ENCODE measurements at regions of chr1 and their contacts with region 1.

Region 1: DNA sequence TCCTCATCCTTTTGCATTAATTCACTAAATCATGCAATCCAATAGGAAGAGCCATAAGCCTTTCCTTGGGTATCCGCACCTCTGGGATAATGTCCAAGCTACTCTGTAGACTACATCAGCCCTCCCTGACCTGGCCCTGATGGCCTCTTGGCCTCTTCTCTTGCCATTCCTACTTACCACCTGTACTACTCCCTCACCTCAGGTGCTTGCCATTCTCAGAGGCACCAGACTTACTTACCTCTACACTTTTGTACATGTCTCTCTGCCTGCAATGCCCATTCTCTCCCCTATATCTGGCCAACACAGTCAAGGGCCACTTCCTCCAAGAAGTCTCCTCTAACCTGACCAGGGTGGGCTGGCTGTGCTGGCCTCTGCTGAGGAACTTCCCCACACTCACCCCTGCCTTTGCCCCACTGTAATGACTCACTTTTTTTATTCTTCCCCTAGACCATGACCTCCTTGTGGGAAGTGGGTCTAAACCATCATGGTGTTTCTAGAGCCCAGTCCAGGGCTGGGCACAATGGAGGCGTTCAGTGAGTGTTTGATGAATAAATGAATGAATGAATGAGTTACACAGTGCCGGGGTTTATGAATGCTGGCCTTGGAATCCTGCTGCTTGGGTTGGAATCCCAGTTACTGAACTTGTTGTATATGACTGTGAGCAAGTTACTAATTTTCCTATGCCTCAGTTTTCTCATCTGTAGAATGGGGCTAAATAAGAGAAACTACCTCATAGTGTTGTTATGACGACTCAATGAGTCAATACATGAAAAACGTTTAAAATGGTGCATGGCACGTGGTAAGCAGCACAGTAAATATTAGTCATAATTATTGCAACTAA is 179.8 kb downstream of the FOXD2 start:
- DNase-seq: no peak
- H3K4me3 Mint-ChIP-seq: no peak overlapping the region
- H3K27ac Mint-ChIP-seq: no peak overlapping the region
- H3K4me1 Mint-ChIP-seq: no peaks in the 10 kb centered on the region
- H3K27me3 Mint-ChIP-seq: peaks cover 13% of the 10 kb centered on the region
- CTCF ChIP-seq: no peak

Region 2: DNA sequence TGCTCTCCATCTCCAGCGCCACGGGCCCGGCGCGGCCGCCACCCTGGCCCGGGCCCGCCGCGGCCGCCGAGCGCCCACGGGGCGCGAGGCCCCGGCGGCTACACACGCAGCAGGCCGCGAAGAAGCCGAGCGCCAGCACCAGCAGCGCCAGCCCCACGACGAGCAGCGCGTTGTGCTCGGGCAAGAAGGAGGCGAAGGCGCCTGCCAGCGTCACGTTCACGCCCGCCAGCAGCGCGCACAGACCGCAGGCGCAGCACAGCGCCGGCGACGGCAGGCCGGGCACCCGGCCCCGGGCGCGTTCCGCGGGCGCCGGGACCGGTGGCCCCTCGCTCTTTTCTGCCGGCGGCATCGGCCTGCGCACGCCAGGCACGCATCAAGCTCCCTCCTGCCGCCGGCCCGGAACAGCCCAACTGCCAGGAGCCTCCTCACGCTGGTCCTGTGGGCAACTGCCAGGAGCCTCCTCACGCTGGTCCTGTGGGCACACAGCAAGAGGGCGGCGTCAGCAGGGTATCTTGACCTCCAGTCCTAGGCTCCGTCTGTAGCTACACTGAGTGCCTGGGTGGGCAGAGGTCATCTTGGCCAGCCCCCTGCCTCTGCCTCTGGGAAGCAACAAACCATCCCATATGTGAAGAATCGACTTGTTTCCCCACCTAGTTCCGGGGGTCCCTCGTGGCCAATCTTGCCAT is 1084.3 kb before region 1 on chr1:
- CTCF ChIA-PET with region 1: no interaction called
- intact Hi-C with region 1: no loop called
- DNase-seq: peak; percentile 22
- H3K4me3 Mint-ChIP-seq: peak overlapping the region; percentile 58
- H3K27ac Mint-ChIP-seq: no peak overlapping the region
- H3K4me1 Mint-ChIP-seq: peaks cover 27% of the 10 kb centered on the region
- H3K27me3 Mint-ChIP-seq: peaks cover 71% of the 10 kb centered on the region
- CTCF ChIP-seq: no peak

Region 3: GRCh38 chr1:47598357-47598756 is 19.2 kb before region 1 on chr1:
- CTCF ChIA-PET with region 1: no interaction called
- intact Hi-C with region 1: loop called (anchors 1 kb)
- DNase-seq: no peak
- H3K4me3 Mint-ChIP-seq: no peak overlapping the region
- H3K27ac Mint-ChIP-seq: no peak overlapping the region
- H3K4me1 Mint-ChIP-seq: no peaks in the 10 kb centered on the region
- H3K27me3 Mint-ChIP-seq: no peaks in the 10 kb centered on the region
- CTCF ChIP-seq: no peak

Region 4: GRCh38 chr1:48164571-48164970 is 547.0 kb after region 1 on chr1:
- CTCF ChIA-PET with region 1: no interaction called
- intact Hi-C with region 1: no loop called
- DNase-seq: no peak
- H3K4me3 Mint-ChIP-seq: no peak overlapping the region
- H3K27ac Mint-ChIP-seq: no peak overlapping the region
- H3K4me1 Mint-ChIP-seq: no peaks in the 10 kb centered on the region
- H3K27me3 Mint-ChIP-seq: peaks cover 35% of the 10 kb centered on the region
- CTCF ChIP-seq: no peak

Measured in Calu3 (cell line).